ENCODE measurements at regions of chr3 and their contacts with region 1.

Region 1: GRCh38 chr3:113736548-113737089 is 9.4 kb downstream of the NAA50 start:
- DNase-seq: no peak
- ATAC-seq: peak; percentile 69

Region 2: DNA sequence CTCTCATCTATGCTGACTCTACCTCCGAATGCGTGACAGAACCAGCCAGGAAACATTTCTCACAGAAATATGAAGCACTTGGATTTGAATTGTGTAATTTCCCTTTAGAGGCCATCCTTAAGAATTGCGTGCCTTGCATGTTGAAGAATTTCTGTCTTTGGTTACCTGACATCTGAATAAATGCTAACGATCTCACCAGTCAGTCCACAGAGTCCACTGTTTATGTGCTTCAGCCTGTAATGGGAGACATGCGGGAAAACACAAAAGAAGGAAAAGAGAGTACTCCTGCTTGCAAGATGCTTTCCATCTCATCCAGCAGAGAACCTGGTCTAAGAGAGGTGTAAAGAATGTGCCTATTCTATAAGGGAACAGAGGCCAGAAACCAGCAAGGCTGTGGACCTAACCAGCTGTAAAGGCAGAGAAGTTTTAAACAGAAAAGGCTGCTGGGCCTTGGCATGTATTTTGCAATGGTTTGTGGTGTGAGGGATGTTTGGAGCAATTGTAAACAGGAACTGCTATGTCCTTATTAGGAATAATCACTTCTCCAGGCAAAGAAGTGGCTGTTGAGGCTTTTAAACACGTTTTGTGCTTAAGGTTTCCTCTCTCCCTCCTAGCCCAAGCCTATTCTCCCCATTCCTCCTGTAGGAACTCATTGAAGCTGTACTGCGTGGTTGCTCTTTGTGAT is 561.7 kb before region 1 on chr3:
- intact Hi-C with region 1: no loop called
- DNase-seq: no peak
- ATAC-seq: no peak

Region 3: DNA sequence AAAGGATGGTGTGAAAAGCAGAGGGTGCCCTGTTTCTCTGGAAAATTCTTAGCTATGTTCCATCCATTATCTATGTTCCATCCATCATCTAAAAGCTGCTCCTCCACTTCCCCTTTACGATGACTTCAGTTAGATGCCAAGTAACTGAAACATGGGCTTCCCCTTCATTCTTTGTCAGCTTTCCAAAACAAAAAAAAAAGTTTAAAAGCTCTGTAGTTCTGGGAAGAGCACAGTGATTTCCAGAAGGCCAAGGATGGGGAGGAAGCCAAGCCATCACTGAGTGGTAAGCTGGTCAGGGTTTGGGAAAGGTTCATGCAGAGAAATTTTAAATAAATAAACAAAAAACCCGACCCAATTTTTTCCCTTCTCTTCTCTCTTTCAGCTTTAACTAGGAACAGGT is 406.9 kb before region 1 on chr3:
- intact Hi-C with region 1: no loop called
- DNase-seq: no peak
- ATAC-seq: no peak

Region 4: DNA sequence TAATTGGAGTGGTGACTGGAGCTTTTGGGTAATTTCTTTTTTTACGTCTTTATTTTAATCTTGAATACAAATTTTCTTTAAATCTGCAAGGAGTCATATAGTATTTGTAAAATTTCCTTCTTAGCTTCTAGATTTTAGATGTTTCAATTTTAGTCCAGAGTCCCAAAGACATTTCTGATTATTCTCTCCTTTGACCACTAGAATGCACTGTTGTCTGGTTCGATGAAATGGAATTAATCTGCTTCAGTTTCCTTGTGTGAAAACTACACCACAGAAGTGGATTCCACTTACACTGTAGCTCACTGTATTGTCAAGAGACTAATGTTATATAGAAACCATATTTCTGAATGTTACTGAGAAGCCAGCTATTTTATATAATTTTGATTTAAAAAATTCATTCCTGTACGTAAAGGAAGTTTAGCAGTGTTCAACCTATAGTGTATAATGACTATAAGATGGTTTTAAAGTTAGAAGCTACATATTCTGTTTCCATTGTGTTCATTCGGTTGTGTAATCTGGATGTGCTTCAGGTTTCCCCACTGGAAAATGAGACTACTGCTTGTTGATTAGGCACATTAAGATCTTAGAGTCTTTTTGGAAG is 108.1 kb after region 1 on chr3:
- intact Hi-C with region 1: loop called in 1 of 2 experiments (anchors 10 kb)
- DNase-seq: no peak
- ATAC-seq: peak; percentile 58

Region 5: DNA sequence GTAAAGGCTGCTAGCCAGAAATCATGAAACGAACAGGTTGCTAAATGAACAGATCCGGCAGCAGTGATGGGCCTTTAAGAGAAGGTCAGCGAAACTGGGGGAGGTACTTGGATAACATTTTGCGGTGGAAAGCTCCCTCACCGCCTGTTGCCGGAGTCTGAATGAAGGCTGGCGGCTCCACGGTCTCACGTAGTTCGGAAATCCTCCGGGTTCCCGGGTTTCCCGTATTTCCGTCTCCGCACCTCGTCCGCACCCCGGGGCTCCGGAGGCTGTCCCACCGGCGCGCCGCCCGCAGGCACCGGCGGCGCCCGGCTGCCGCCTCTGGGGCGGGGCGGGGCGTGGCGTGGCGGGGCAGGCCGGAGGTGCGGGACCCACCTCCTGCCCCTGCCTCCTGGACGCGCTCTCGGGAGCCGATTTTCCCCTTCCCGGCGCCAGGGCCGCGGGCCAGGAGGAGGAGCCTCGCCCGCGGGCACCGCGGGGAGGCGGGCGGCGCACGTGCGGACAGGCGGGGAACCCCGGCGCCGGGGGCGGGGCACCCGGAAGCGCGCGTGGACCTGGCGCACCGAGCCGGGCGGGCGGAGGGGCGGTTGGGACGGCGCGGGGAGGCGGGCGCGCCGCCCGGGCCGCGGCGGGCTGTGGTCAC is 210.9 kb after region 1 on chr3 and contains the start of gene ZDHHC23:
- intact Hi-C with region 1: no loop called
- DNase-seq: peak; percentile 87 to 88
- ATAC-seq: peak; percentile 88
- total RNA-seq, gene ZDHHC23: 47.7 to 48.3 TPM

Measured in left colon (tissue), 2 donors.